Psoas muscle (tissue), 8 donors: ENCODE measurements at regions of chr18 and their contacts with region 1.

Region 1: GRCh38 chr18:23503038-23503962 is at the start of gene RMC1:
- DNase-seq: peak; percentile 98
- ATAC-seq: peak; percentile 98 to 99 (median 99)
- H3K4me3 ChIP-seq: peak within 1 kb of the TSS; percentile 96
- H3K27ac ChIP-seq: peak within 1 kb of the TSS; percentile 93
- H3K4me1 ChIP-seq: peaks cover 10% of the 10 kb centered on the region
- H3K27me3 ChIP-seq: no peaks in the 10 kb centered on the region
- CTCF ChIP-seq: no peak
- total RNA-seq, gene RMC1: 13.8 to 20.1 (median 16.4) TPM

Region 2: GRCh38 chr18:23452728-23453679 is 50.3 kb before region 1 on chr18 and contains the start of gene RIOK3:
- intact Hi-C with region 1: loop called (anchors 5 kb)
- DNase-seq: peak; percentile 99
- ATAC-seq: peak; percentile 98 to 99 (median 99)
- H3K4me3 ChIP-seq: peak within 1 kb of the TSS; percentile 84
- H3K27ac ChIP-seq: peak within 1 kb of the TSS; percentile 95
- H3K4me1 ChIP-seq: peaks cover 43% of the 10 kb centered on the region
- H3K27me3 ChIP-seq: no peaks in the 10 kb centered on the region
- CTCF ChIP-seq: no peak
- total RNA-seq, gene RIOK3: 78.6 to 116 (median 89.1) TPM

Region 3: DNA sequence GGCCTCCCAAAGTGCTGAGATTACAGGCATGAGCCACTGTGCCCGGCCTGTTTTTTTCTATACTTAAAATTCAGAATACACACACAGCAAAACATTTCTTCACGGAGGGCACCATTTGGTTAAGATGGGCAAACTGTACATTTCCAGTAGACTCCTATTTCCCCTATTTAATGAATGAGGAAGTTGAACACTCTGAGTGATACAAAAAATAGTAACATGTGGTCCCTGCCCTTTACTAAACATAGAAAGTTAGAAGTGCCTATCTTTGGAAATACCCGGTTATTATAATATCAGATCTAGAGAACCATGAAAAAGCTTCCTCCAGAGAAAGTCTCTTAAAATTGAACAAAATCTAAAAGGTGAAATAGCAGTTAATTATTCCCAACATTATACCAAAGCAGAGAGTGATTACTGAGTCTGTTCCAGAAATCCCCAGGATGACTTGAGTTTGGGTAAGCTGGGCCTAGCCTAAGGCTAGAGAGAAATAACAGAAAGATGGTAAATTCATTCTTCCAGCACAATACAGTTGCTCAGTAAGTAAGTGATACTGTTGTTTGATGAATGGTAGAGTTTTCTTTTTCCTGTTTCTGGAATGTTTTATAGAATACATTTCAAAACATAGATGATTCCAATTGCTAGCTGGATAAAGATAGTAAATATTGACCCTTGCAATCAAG is 23.3 kb before region 1 on chr18:
- intact Hi-C with region 1: no loop called
- DNase-seq: no peak
- ATAC-seq: no peak
- H3K4me3 ChIP-seq: no peak overlapping the region
- H3K27ac ChIP-seq: no peak overlapping the region
- H3K4me1 ChIP-seq: no peaks in the 10 kb centered on the region
- H3K27me3 ChIP-seq: no peaks in the 10 kb centered on the region
- CTCF ChIP-seq: no peak

Region 4: DNA sequence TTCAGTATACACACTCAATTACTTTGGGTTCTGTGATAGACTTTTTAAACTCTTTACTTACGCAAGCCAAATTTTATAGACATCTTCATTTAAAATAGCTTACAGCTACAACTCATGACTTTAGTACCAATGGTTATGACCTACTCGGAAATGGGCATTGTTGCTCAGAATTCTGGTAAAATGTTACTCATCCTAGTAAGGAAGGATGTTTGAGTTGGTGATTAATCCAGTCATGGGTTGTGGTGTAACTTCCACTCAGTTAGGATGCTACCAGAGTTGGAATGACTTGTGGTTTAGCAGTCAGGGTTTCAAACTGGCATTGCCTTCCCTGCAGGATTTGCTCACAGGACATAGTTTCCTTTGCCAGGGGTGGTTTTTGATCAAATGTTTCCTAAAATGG is 90.4 kb after region 1 on chr18:
- intact Hi-C with region 1: no loop called
- DNase-seq: no peak
- ATAC-seq: no peak
- H3K4me3 ChIP-seq: no peak overlapping the region
- H3K27ac ChIP-seq: no peak overlapping the region
- H3K4me1 ChIP-seq: no peaks in the 10 kb centered on the region
- H3K27me3 ChIP-seq: no peaks in the 10 kb centered on the region
- CTCF ChIP-seq: no peak